ENCODE measurements at regions of chr4 and their contacts with region 1.

Region 1: DNA sequence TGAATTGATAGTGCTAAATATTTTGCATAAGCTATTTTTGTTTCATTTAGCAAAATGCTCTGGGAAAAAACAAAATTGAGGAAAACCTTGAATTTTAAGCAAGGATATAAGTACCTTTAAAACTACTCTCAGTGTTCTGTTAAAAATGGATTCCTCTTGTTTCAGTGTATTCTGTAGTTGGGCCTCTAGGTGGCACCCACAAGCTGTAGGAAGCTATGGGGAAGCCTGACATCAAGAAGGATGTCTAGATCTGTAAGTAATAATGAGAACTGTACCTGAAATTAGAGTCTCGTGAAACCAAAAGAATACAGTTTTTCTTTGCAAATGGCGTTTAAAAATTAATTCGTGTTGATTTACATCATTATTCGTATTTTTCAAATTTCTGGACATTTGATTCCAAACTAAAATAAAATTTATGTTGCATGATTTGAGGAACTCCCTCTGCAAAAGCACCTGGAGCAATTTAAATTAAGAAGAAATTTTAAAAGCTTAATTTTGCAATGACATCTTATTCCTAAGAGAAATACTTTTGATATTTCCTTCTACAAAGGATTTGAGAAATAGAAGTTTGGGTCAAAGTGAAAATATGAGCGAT is 51.2 kb downstream of the TMPRSS11E start:
- DNase-seq: peak; percentile 53
- ATAC-seq: peak; percentile 74; the same call in 1 of the 2 replicates
- H3K4me3 ChIP-seq: no peak overlapping the region
- H3K27ac ChIP-seq: no peak overlapping the region
- H3K4me1 ChIP-seq: no peaks in the 10 kb centered on the region
- H3K27me3 ChIP-seq: no peaks in the 10 kb centered on the region
- CTCF ChIP-seq: peak; percentile 70; the same call in 1 of the 2 replicates

Region 2: GRCh38 chr4:68349649-68350360 is 148.7 kb before region 1 on chr4 and contains the start of gene YTHDC1:
- CTCF ChIA-PET with region 1: no interaction called
- POLR2A ChIA-PET with region 1: no interaction called
- in situ Hi-C with region 1: no loop called
- intact Hi-C with region 1: no loop called
- DNase-seq: no peak
- ATAC-seq: peak; percentile 99
- H3K4me3 ChIP-seq: peak within 1 kb of the TSS; percentile 63 to 85
- H3K27ac ChIP-seq: peak within 1 kb of the TSS; percentile 87
- H3K4me1 ChIP-seq: peaks cover 13% of the 10 kb centered on the region
- H3K27me3 ChIP-seq: no peaks in the 10 kb centered on the region
- CTCF ChIP-seq: no peak
- total RNA-seq, gene YTHDC1: 44.5 TPM

Region 3: GRCh38 chr4:68476191-68476590 is 22.3 kb before region 1 on chr4:
- CTCF ChIA-PET with region 1: no interaction called
- POLR2A ChIA-PET with region 1: no interaction called
- in situ Hi-C with region 1: no loop called
- intact Hi-C with region 1: no loop called
- DNase-seq: no peak
- ATAC-seq: no peak
- H3K4me3 ChIP-seq: no peak overlapping the region
- H3K27ac ChIP-seq: no peak overlapping the region
- H3K4me1 ChIP-seq: no peaks in the 10 kb centered on the region
- H3K27me3 ChIP-seq: no peaks in the 10 kb centered on the region
- CTCF ChIP-seq: no peak

Region 4: GRCh38 chr4:69167300-69167699 is 668.8 kb after region 1 on chr4:
- CTCF ChIA-PET with region 1: no interaction called
- POLR2A ChIA-PET with region 1: no interaction called
- in situ Hi-C with region 1: no loop called
- intact Hi-C with region 1: loop called (anchors 2 kb)
- DNase-seq: no peak
- ATAC-seq: no peak
- H3K4me3 ChIP-seq: no peak overlapping the region
- H3K27ac ChIP-seq: no peak overlapping the region
- H3K4me1 ChIP-seq: no peaks in the 10 kb centered on the region
- H3K27me3 ChIP-seq: no peaks in the 10 kb centered on the region
- CTCF ChIP-seq: no peak